ENCODE measurements at regions of chr1 and their contacts with region 1.

Region 1: GRCh38 chr1:150515328-150516048 is at the start of gene FALEC:
- DNase-seq: peak; percentile 84 to 97
- H3K4me3 ChIP-seq: peak within 1 kb of the TSS; percentile 70
- H3K27ac ChIP-seq: no peak within 1 kb of the TSS
- H3K4me1 ChIP-seq: peaks cover 22% of the 10 kb centered on the region
- H3K27me3 ChIP-seq: no peaks in the 10 kb centered on the region
- CTCF ChIP-seq: no peak
- total RNA-seq, gene FALEC: 0.94 and 2.1 TPM in 2 replicates

Region 2: DNA sequence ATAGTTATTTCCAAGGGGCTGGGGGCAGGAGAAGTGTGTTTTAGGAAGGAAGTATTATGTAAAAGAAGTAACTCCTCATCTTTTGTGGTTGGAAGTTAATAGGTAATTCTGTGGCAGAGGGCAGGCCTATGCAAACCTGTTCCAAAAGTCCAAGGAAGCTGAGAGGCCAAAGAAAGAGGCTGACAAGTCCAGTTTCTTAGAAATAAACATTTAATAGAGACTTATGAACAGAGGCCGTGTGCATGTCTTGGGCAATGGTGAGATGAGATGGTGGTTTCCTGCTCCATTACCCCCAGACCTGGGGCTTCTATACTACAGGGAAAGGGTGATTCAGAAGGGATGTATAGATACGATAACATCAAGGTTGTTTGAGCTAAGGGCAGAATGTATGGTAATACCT is 265.6 kb before region 1 on chr1:
- CTCF ChIA-PET with region 1: interaction called, 6 read pairs
- POLR2A ChIA-PET with region 1: interaction called, 10 read pairs
- intact Hi-C with region 1: no loop called
- DNase-seq: no peak
- H3K4me3 ChIP-seq: no peak overlapping the region
- H3K27ac ChIP-seq: no peak overlapping the region
- H3K4me1 ChIP-seq: no peaks in the 10 kb centered on the region
- H3K27me3 ChIP-seq: no peaks in the 10 kb centered on the region
- CTCF ChIP-seq: no peak

Region 3: GRCh38 chr1:150397402-150398032 is 118.0 kb before region 1 on chr1:
- CTCF ChIA-PET with region 1: no interaction called
- POLR2A ChIA-PET with region 1: interaction called, 10 read pairs
- intact Hi-C with region 1: no loop called
- DNase-seq: no peak
- H3K4me3 ChIP-seq: no peak overlapping the region
- H3K27ac ChIP-seq: 0 out of 2 replicates have a peak overlapping the region, but pooled peaks have one; percentile 16
- H3K4me1 ChIP-seq: no peaks in the 10 kb centered on the region
- H3K27me3 ChIP-seq: no peaks in the 10 kb centered on the region
- CTCF ChIP-seq: no peak

Region 4: DNA sequence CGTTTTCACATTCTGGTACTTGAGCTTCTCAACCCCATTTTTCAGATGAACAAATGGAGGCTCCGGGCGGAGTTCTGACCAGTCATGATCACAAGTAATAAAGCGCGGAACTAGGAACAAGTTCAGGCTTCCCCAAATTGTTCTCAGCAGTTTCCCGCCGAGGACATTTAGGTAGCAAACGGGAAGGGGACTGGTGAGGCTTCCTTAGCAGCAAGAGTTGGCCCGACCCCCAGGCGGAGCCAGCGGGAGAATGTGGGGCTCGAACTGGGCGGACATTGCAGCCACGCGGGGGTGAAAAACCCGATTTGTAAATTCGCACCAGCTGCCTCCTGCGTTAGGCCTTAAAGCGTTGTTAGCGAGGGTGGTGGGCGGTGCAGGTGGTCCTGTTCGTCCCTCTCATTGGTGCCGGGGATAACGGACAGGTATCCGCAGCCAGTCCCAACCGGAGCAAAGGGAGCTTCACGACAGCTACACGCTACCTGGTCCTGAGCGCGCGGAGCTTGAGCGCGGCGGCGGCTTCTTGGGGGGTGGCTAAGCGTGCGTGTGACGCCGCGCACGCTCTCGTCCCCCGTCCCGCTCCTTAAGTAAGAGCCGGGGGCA is 615.6 kb after region 1 on chr1:
- CTCF ChIA-PET with region 1: no interaction called
- POLR2A ChIA-PET with region 1: interaction called, 15 read pairs
- intact Hi-C with region 1: no loop called
- DNase-seq: peak; percentile 64 to 84
- H3K4me3 ChIP-seq: peak overlapping the region; percentile 42; the same call in 1 of the 2 replicates
- H3K27ac ChIP-seq: no peak overlapping the region
- H3K4me1 ChIP-seq: no peaks in the 10 kb centered on the region
- H3K27me3 ChIP-seq: peaks cover 18% of the 10 kb centered on the region; the same call in 1 of the 2 replicates
- CTCF ChIP-seq: no peak